CD4-positive, alpha-beta T cell (primary cell): ENCODE measurements at regions of chr12 and their contacts with region 1.

Region 1: GRCh38 chr12:6367065-6367968 is 8.0 kb downstream of the SCNN1A start:
- DNase-seq: peak in 10 of 14 experiments; percentile 17 to 77 (median 44)
- ATAC-seq: peak; percentile 65
- H3K4me3 ChIP-seq: no peak overlapping the region
- H3K4me3 Mint-ChIP-seq: peak overlapping the region; percentile 70
- H3K27ac ChIP-seq: no peak overlapping the region
- H3K27ac Mint-ChIP-seq: peak overlapping the region; percentile 55
- H3K4me1 ChIP-seq: peaks cover 37% of the 10 kb centered on the region
- H3K4me1 Mint-ChIP-seq: peaks cover 30% of the 10 kb centered on the region
- H3K27me3 ChIP-seq: no peaks in the 10 kb centered on the region
- H3K27me3 Mint-ChIP-seq: no peaks in the 10 kb centered on the region
- CTCF ChIP-seq: peak; percentile 68

Region 2: DNA sequence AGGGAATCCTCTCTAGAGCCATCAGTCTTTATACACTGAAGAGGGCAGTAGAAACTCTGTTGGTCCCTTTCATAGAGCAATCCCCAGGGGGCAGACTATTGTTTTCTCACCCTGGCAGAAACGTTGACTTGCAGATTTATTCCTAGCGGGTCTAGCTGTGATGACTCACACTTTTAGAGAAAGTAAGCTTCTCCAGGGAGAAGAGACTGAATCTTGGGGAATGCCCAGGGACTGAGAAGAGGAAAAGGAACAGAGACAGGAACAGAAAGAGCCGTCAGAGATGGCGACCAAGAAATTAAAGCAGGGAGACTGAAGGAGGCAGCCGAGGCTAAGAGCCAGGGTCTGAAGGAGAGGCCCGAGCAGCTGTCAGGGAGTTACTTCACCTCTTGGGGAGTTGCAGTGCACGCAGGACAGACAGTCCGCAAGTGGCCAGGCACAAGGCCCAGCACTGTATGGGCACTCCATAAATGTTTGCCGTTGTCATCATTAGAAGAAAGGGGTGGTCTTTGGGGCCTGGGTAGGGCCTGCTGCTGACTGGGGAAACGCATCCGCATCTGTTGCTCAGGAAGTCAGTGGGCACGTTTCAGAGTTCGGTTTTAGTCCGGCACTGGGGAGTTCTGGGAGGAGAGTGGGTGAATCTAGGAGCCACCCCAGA is 43.9 kb before region 1 on chr12:
- CTCF ChIA-PET with region 1: interaction called, 13 read pairs
- POLR2A ChIA-PET with region 1: interaction called, 11 read pairs
- intact Hi-C with region 1: loop called in 1 of 2 experiments (anchors 5 kb)
- DNase-seq: peak in 7 of 14 experiments; percentile 18 to 83 (median 63)
- ATAC-seq: peak; percentile 89
- H3K4me3 ChIP-seq: peak overlapping the region; percentile 12
- H3K4me3 Mint-ChIP-seq: peak overlapping the region; percentile 86
- H3K27ac ChIP-seq: peak overlapping the region; percentile 12 to 13
- H3K27ac Mint-ChIP-seq: peak overlapping the region; percentile 85
- H3K4me1 ChIP-seq: peaks cover 45% of the 10 kb centered on the region
- H3K4me1 Mint-ChIP-seq: peaks cover 60% of the 10 kb centered on the region
- H3K27me3 ChIP-seq: no peaks in the 10 kb centered on the region
- H3K27me3 Mint-ChIP-seq: no peaks in the 10 kb centered on the region
- CTCF ChIP-seq: peak; percentile 72

Region 3: DNA sequence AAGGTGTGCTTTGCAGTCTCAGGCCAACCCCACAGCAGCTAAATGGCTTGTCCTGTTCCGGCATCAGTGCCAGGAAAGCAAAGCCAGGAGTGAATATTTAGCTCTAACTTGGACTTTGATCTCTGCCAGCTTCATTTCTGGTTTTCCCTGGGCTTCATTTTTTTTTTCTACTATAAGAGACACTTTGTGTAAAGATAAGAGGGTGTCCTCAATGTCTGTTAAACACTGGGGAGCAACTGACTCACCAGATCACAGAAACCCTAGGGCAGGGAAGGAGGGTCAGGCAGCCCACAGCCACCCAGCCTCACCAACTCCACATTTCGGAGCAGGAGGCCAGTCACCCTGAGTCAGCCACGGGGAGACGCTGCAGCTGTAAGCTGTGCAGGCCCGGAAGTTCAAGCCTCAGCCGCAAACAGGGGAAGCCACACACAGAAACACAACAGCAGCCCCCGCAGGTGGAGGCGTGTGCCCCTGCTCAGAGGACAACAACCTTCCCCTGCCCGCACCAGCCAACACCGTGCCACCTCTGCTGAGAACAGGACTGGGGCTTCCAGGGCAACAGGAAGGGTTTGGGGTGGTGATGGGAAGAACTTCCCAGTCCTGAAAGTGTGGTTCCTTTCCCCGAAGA is 31.8 kb before region 1 on chr12:
- CTCF ChIA-PET with region 1: interaction called, 24 read pairs
- POLR2A ChIA-PET with region 1: interaction called, 58 read pairs
- intact Hi-C with region 1: loop called (anchors 1 kb)
- DNase-seq: peak; percentile 68 to 92 (median 82)
- ATAC-seq: peak; percentile 77
- H3K4me3 ChIP-seq: peak overlapping the region; percentile 100
- H3K4me3 Mint-ChIP-seq: no peak overlapping the region
- H3K27ac ChIP-seq: peak overlapping the region; percentile 80 to 90
- H3K27ac Mint-ChIP-seq: no peak overlapping the region
- H3K4me1 ChIP-seq: peaks cover 86% of the 10 kb centered on the region
- H3K4me1 Mint-ChIP-seq: peaks cover 8% of the 10 kb centered on the region
- H3K27me3 ChIP-seq: no peaks in the 10 kb centered on the region
- H3K27me3 Mint-ChIP-seq: no peaks in the 10 kb centered on the region
- CTCF ChIP-seq: peak; percentile 76

Region 4: GRCh38 chr12:6341417-6342139 is 25.7 kb before region 1 on chr12 and contains the start of gene TNFRSF1A:
- CTCF ChIA-PET with region 1: interaction called, 24 read pairs
- POLR2A ChIA-PET with region 1: interaction called, 58 read pairs
- intact Hi-C with region 1: loop called (anchors 2 kb)
- DNase-seq: peak in 9 of 14 experiments; percentile 31 to 75 (median 44)
- ATAC-seq: peak; percentile 54
- H3K4me3 ChIP-seq: peak within 1 kb of the TSS; percentile 100
- H3K4me3 Mint-ChIP-seq: no peak within 1 kb of the TSS
- H3K27ac ChIP-seq: peak within 1 kb of the TSS; percentile 80 to 90
- H3K27ac Mint-ChIP-seq: no peak within 1 kb of the TSS
- H3K4me1 ChIP-seq: peaks cover 78% of the 10 kb centered on the region
- H3K4me1 Mint-ChIP-seq: peaks cover 39% of the 10 kb centered on the region
- H3K27me3 ChIP-seq: no peaks in the 10 kb centered on the region
- H3K27me3 Mint-ChIP-seq: no peaks in the 10 kb centered on the region
- CTCF ChIP-seq: no peak
- total RNA-seq, gene TNFRSF1A: 16.3 to 19.2 TPM